ENCODE measurements at regions of chr12 and their contacts with region 1.

Region 1: DNA sequence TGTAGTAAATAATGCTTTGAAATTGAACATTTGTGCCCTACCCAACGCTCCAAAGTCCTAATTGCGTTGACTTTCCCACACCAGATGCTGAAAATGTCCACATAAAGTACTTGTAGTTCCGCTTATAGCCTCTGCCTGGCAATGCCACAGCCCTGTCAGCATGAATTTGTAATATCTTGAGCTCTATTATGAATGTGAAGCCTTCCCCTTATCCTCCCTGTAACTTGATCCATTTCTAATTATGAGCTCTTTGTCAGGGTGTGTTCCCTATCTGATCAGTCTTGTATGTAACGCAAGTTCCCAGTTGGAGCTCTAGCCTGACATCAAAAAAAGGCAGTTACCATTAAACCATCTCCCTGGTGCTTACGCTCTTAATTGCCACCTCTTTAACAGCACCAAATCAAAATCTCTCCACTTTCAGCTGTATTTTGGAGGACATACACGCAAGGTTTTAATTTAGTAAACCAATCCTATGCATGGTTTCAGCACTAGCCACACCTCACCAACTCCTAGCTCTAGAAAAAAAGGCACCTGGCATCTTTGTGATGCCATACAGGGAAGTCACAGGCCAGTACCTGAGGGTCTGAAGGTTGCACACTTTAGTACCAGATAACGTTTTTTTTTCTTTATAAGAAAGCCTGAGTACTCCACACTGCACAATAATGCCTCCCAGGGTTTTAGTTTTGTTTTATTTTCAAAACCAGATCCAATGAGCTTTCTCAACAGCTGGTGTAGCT is 69.3 kb downstream of the EEA1 start:
- DNase-seq: no peak
- CTCF ChIP-seq: no peak

Region 2: DNA sequence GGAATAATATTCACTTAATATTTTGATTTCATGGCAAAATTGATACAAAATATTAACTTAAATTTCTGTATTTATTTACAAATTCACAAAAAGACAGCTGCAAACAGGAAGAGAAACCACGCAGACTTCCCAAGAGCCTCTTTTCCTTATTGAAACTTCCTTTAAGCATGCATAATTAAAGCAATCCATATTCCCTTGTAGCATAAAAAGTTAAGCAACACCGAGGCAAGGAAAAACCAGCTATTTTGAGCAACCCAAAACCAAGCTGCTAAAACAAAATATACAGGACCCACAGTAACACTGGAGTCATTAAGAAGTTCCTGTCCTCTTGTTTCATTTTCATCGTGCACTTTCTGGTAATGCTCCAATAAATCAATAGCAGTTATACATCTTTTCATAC is 11.3 kb after region 1 on chr12:
- CTCF ChIA-PET with region 1: interaction called, 13 read pairs
- POLR2A ChIA-PET with region 1: no interaction called
- DNase-seq: peak; percentile 19
- CTCF ChIP-seq: no peak

Region 3: GRCh38 chr12:93676408-93677194 is 816.8 kb after region 1 on chr12:
- CTCF ChIA-PET with region 1: no interaction called
- POLR2A ChIA-PET with region 1: no interaction called
- DNase-seq: no peak
- CTCF ChIP-seq: no peak

Measured in GM10248 (cell line).